ENCODE measurements at regions of chr2 and their contacts with region 1.

Region 1: GRCh38 chr2:47437287-47437686 is 34.3 kb downstream of the MSH2 start:
- DNase-seq: peak in 1 of 5 donors; percentile 15
- ATAC-seq: peak in 2 of 4 donors; percentile 36 to 41
- H3K4me3 ChIP-seq: no peak overlapping the region
- H3K27ac ChIP-seq: no peak overlapping the region
- H3K4me1 ChIP-seq: no peaks in the 10 kb centered on the region
- H3K27me3 ChIP-seq: no peaks in the 10 kb centered on the region
- CTCF ChIP-seq: peak; percentile 24 to 73 (median 57)
- POLR2A ChIP-seq: no peak

Region 2: GRCh38 chr2:47675196-47675825 is 238.0 kb after region 1 on chr2:
- intact Hi-C with region 1: no loop called
- DNase-seq: no peak
- ATAC-seq: no peak
- H3K4me3 ChIP-seq: no peak overlapping the region
- H3K27ac ChIP-seq: no peak overlapping the region
- H3K4me1 ChIP-seq: no peaks in the 10 kb centered on the region
- H3K27me3 ChIP-seq: no peaks in the 10 kb centered on the region
- CTCF ChIP-seq: no peak
- POLR2A ChIP-seq: no peak

Region 3: GRCh38 chr2:47735136-47735869 is 298.0 kb after region 1 on chr2:
- intact Hi-C with region 1: no loop called
- DNase-seq: no peak
- ATAC-seq: no peak
- H3K4me3 ChIP-seq: no peak overlapping the region
- H3K27ac ChIP-seq: no peak overlapping the region
- H3K4me1 ChIP-seq: no peaks in the 10 kb centered on the region
- H3K27me3 ChIP-seq: peaks cover 0 to 5% (median 0%) of the 10 kb centered on the region in 9 donors
- CTCF ChIP-seq: no peak
- POLR2A ChIP-seq: no peak

Region 4: GRCh38 chr2:48092846-48093803 is 655.8 kb after region 1 on chr2:
- intact Hi-C with region 1: loop called in 1 of 10 experiments (anchors 10 kb)
- DNase-seq: peak in 1 of 5 donors; percentile 23
- ATAC-seq: peak in 2 of 4 donors; percentile 42 to 49
- H3K4me3 ChIP-seq: no peak overlapping the region
- H3K27ac ChIP-seq: peak overlapping the region in 2 of 12 donors; percentile 4 to 16
- H3K4me1 ChIP-seq: peaks cover 0 to 9% (median 0%) of the 10 kb centered on the region in 12 donors
- H3K27me3 ChIP-seq: no peaks in the 10 kb centered on the region
- CTCF ChIP-seq: no peak
- POLR2A ChIP-seq: no peak